ENCODE measurements at regions of chr14 and their contacts with region 1.

Region 1: DNA sequence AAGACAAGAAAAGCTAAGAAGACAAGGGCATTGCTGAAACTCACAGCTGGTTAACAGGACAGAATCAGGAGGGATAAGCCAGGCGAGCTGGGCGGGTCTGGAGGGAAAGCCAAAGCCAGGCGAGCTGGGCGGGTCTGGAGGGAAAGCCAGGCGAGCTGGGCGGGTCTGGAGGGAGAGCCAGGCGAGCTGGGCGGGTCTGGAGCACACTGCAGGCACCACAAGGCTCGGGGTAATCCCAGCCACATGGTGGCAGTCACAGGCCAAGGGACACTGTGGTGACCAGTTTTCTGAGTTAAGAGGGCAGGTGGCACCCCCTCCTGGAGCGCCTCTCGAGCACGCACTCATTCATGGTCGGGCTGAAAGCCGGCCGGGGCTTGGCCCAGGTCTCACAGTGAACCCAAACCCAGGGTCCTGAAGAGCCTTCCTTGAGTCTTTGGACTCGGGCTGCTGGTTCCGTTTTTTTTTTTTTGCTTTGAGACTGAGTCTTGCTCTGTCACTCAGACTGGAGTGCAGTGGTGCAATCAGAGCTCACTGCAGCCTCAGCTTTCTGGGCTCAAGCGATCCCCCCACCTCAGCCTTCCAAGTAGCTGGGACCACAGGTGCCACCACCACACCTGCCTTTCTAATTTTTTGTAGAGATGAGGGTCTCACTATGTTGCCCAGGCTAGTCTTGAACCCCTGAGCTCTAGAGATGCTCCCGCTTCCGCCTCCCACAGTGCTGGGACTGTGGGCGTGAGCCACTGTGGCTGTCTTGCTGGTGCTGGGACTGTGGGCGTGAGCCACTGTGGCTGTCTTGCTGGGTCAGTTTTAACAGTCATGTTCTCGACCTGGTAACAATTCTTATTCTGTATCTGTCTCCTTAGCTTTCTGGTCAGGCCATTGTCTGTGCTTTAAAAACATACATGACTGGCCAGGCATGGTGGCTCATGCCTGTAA is 40.2 kb downstream of the HSP90AA1 start:
- DNase-seq: peak; percentile 58 to 81
- ATAC-seq: peak; percentile 77 to 87
- H3K4me3 ChIP-seq: no peak overlapping the region
- H3K27ac ChIP-seq: no peak overlapping the region
- H3K4me1 ChIP-seq: no peaks in the 10 kb centered on the region
- CTCF ChIP-seq: peak; percentile 36
- EP300 ChIP-seq: no peak
- POLR2A ChIP-seq: no peak
- RAD21 ChIP-seq: peak; percentile 38 to 58; a peak in 4 of 5 replicates

Region 2: GRCh38 chr14:101761032-101761880 is 285.4 kb before region 1 on chr14 and contains the start of gene PPP2R5C:
- CTCF ChIA-PET with region 1: no interaction called
- POLR2A ChIA-PET with region 1: no interaction called
- DNase-seq: peak; percentile 91 to 95
- ATAC-seq: peak; percentile 81 to 94
- H3K4me3 ChIP-seq: peak within 1 kb of the TSS; percentile 82
- H3K27ac ChIP-seq: peak within 1 kb of the TSS; percentile 77 to 93
- H3K4me1 ChIP-seq: peaks cover 8% of the 10 kb centered on the region; the same call in 1 of the 3 replicates
- CTCF ChIP-seq: no peak
- EP300 ChIP-seq: no peak
- POLR2A ChIP-seq: peak; percentile 43
- RAD21 ChIP-seq: no peak
- polyA plus RNA-seq, gene PPP2R5C: 133 and 150 TPM in 2 replicates

Region 3: GRCh38 chr14:102028421-102029172 is 18.0 kb before region 1 on chr14:
- CTCF ChIA-PET with region 1: interaction called, 11 read pairs
- POLR2A ChIA-PET with region 1: no interaction called
- DNase-seq: no peak
- ATAC-seq: peak; percentile 20 to 33; a peak in 2 of 6 replicates
- H3K4me3 ChIP-seq: no peak overlapping the region
- H3K27ac ChIP-seq: no peak overlapping the region; a peak in 1 of 6 replicates
- H3K4me1 ChIP-seq: peaks cover 8% of the 10 kb centered on the region; the same call in 1 of the 3 replicates
- CTCF ChIP-seq: no peak
- EP300 ChIP-seq: no peak
- POLR2A ChIP-seq: no peak
- RAD21 ChIP-seq: no peak

Region 4: DNA sequence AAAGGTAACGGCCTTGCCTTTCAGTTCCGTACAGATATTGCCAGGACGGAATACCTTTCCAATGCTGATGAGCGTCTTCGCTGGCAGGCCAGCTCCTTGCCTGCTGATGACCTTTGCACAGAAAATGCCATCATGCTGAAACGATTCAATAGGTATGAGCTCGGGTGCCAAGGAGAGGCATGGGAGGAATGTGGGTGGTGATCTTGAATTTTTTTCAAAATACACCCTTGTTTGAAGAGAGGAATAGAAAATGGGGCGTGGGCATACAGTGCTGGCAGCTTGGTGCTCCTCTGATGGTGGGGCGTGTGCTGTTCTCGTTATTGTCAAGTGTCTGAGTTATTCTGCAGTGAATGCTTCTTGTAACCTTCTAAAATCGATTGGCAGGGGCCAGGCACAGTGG is 12.3 kb before region 1 on chr14:
- CTCF ChIA-PET with region 1: interaction called, 13 read pairs
- POLR2A ChIA-PET with region 1: no interaction called
- DNase-seq: peak in 1 of 2 experiments; percentile 22
- ATAC-seq: no peak; a peak in 2 of 6 replicates
- H3K4me3 ChIP-seq: no peak overlapping the region
- H3K27ac ChIP-seq: no peak overlapping the region
- H3K4me1 ChIP-seq: no peaks in the 10 kb centered on the region; the same call in 2 of the 3 replicates
- CTCF ChIP-seq: no peak
- EP300 ChIP-seq: no peak
- POLR2A ChIP-seq: no peak
- RAD21 ChIP-seq: no peak

Region 5: DNA sequence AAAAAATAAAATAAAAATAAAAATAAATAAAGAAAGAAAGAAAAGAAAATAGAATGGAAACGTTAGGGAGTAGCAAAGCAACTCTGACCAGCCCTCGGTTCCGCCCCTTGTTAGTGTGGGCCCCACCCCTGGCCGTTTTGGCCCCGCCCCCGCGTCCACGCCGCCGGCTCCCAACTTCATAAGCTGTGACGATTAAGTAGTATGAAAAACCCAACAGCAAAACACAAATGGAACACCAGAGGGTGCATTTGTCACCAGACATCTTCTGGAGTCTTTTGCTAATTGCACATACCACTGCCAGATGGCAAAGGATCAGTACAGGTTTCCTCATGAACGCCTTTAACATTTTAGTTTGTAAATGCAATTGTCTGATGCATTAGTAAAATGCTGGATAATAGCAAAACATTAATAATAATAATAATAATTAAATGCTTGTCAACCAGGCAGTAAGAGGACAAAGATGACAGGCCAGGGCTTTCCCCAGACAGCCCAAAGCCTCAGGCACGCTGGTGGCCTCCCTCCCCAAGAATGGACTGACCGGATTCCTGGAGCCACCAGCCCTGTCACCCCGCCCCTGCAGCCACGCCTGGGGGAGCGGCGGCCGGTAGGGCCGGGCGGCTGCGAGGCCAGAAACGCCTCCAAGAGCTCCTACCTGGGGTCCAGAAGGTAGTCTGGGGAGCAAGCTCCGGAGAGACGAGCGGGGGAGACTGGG is 16.6 kb after region 1 on chr14:
- CTCF ChIA-PET with region 1: interaction called, 11 read pairs
- POLR2A ChIA-PET with region 1: no interaction called
- DNase-seq: peak; percentile 81 to 89
- ATAC-seq: peak; percentile 83 to 93
- H3K4me3 ChIP-seq: no peak overlapping the region
- H3K27ac ChIP-seq: no peak overlapping the region
- H3K4me1 ChIP-seq: no peaks in the 10 kb centered on the region
- CTCF ChIP-seq: peak; percentile 51
- EP300 ChIP-seq: no peak
- POLR2A ChIP-seq: no peak
- RAD21 ChIP-seq: peak; percentile 59 to 60